Aorta (tissue), 5 donors: ENCODE measurements at regions of chr7 and their contacts with region 1.

Region 1: GRCh38 chr7:51034521-51035264 is 252.0 kb upstream of the GRB10 start:
- DNase-seq: no peak
- ATAC-seq: no peak
- H3K4me3 ChIP-seq: no peak overlapping the region
- H3K27ac ChIP-seq: no peak overlapping the region
- H3K4me1 ChIP-seq: no peaks in the 10 kb centered on the region
- H3K27me3 ChIP-seq: no peaks in the 10 kb centered on the region

Region 2: DNA sequence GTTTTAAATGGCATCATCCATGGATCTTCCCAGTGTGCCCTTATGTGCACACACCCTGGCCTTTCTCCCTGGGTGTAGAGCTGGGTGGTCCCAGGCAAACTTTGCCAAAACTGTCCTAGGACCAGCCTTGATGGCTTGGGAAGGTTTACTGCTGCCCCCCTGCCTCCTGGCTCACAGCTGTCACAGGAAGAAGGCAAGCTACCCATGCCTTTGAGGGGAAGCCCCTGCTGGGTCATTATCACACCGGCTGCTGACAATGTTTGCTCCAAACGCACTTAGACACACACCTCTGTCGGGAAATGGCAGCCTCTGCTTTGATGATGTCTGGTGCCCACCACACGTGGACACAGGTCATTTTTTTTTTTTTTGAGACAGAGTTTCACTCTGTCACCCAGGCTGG is 559.4 kb before region 1 on chr7:
- intact Hi-C with region 1: no loop called
- DNase-seq: no peak
- ATAC-seq: no peak
- H3K4me3 ChIP-seq: no peak overlapping the region
- H3K27ac ChIP-seq: no peak overlapping the region
- H3K4me1 ChIP-seq: no peaks in the 10 kb centered on the region
- H3K27me3 ChIP-seq: no peaks in the 10 kb centered on the region

Region 3: DNA sequence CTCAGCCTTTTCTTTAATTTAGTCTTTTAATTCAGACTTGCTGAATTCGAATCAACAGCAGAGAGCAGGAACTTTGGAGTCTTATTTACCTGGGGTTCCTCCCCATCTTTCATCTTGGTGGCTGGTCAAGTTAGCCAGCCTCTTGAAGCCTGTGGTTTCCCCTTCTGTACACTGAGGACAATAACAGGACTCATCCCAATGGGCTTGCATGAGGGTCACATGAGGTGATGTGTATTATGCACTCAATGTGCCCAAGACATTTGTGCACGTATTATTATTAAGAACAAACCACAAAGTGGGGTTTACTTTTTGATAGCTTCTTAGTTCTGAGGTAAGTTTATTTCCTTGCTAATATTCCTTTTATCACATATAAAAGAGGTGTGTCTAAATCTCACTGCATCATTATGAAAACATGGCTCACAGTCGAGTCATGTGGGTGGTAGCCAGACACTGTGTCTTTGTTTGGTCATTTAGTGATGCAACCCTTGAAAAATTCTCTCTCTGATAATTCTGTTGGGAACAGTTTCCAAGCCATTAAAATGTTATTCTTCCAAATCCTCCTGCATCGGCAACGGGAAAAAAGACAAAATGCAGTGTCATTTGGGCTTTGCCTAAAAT is 165.5 kb before region 1 on chr7:
- intact Hi-C with region 1: loop called in 1 of 2 experiments (anchors 10 kb)
- DNase-seq: no peak
- ATAC-seq: peak; percentile 85
- H3K4me3 ChIP-seq: no peak overlapping the region
- H3K27ac ChIP-seq: no peak overlapping the region
- H3K4me1 ChIP-seq: peaks cover 0 to 3% of the 10 kb centered on the region in 2 donors
- H3K27me3 ChIP-seq: no peaks in the 10 kb centered on the region